Calu3 (cell line): ENCODE measurements at regions of chr11 and their contacts with region 1.

Region 1: DNA sequence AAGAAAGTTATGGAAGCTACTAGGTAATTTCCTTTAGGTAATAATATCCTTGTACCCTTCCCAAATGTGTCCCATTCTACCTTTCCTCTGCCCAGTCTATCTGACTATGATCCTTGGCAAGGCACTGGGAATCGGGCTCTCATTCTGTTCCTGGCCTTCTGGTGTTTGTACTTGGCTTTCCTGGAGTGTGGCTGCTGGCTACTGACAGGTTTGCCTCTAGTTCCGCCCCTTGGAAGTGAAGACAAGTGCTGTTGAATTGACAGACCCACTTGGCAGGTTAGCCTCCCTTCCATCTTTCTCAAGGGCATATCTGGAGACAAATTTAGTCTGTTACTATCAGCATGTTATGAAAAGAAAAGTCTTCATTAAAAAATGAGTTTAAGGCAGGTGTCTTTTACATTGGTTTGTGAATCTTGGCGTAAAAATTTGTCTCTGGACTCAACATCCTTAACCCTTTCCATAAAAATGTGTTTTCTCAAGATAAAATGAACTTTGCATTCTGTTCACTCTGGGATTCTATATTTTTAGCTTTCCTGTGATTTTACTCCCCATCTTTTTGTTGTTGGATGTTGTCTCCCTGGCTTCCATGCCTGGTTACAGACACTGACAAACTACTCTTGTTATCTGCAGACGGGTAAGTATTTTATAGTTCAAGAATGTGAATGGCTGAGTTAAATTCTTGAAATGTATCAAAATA is 287.4 kb upstream of the PDGFD start:
- DNase-seq: peak; percentile 5
- H3K4me3 Mint-ChIP-seq: no peak overlapping the region
- H3K27ac Mint-ChIP-seq: peak overlapping the region; percentile 77
- H3K4me1 Mint-ChIP-seq: peaks cover 18% of the 10 kb centered on the region
- H3K27me3 Mint-ChIP-seq: no peaks in the 10 kb centered on the region
- CTCF ChIP-seq: no peak

Region 2: DNA sequence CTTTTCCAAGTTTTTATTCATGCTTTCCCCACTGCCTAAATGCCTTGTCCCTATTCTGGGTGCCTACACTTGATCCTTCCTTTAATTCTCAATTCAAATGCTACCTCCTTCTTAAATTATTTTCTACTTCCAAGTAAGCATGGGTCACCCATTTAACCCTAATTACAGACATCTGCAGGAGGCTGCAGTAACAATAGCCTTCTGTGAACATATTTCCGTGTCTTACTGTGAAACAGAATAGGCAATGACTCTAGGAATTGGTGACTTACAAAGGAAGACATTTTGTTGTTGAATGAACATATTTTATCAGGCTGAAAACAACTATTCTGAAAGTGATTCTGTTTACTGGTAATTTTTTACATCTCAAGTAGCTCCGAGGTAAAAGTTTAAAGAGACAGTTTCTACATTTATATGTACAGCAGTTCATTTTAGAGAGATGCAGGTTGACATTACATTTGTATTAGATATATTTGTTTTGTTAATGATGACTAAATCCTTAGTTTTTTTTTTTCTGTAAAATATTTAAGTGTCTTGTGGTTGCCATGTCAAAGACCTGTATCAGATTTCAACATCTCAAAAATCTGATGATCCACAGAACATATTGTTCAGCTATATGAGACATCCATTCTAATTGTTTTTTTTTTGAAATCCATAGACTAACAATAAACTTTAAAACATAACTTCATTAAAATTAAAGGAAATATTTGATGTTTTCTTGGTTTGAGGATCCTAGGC is 130.1 kb after region 1 on chr11:
- CTCF ChIA-PET with region 1: no interaction called
- intact Hi-C with region 1: loop called (anchors 5 kb)
- DNase-seq: no peak
- H3K4me3 Mint-ChIP-seq: no peak overlapping the region
- H3K27ac Mint-ChIP-seq: no peak overlapping the region
- H3K4me1 Mint-ChIP-seq: peaks cover 26% of the 10 kb centered on the region
- H3K27me3 Mint-ChIP-seq: no peaks in the 10 kb centered on the region
- CTCF ChIP-seq: no peak